ENCODE measurements at regions of chr10 and their contacts with region 1.

Region 1: DNA sequence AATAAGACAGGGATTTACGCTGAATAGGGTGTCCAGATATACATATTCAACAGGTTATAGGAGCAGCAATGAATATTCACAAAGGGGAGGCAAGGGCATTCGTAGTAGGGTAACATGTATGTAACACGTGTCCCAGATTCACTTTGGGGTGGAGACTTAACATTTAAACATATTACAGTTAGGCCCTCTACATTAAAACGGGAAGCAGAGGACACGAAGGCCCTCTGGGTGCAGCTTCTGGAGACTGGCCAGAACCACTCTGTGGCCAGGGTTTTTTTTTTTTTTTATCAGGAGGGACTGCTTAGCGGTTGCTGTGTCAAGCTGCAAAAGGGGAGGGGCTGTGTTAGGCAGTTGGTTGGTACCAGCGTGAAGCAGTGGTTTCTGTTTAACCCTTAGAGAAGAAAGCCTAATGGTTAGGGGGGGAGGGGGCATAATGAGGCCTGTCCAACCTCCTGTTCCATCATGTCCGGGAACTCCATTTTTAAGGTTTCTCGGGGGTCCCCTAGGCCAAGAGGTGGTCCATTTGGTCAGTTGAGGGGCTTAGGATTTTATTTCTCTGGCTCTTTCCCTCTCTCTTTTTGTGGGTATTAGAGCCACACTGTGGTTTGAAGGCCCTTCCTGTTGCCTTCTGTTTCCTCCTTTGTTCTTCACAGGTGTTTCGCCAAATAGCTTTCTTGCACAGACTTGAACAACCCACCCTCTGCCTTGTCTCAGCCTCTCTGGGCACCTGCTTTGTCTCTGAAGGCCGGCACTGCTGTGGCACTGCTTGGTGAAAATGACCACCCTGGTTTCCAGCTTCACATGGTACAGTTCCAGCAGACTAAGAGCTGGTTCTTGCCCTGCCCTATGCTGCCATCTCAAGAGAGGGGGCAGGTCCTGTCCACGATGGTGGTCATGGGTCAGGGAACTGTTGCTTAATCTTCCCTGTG is 26.4 kb downstream of the PRF1 start:
- DNase-seq: peak; percentile 81
- ATAC-seq: peak; percentile 76
- H3K4me3 ChIP-seq: peak overlapping the region; percentile 26; the same call in 1 of the 2 replicates
- H3K27ac ChIP-seq: peak overlapping the region; percentile 89
- H3K4me1 ChIP-seq: peaks cover 41% of the 10 kb centered on the region
- H3K27me3 ChIP-seq: no peaks in the 10 kb centered on the region
- CTCF ChIP-seq: no peak
- EP300 ChIP-seq: peak; percentile 21 to 81; a peak in 3 of 4 replicates
- POLR2A ChIP-seq: no peak
- RAD21 ChIP-seq: 0 out of 2 replicates have a peak, but pooled peaks have one; percentile 2

Region 2: GRCh38 chr10:70558871-70559810 is 17.0 kb before region 1 on chr10:
- CTCF ChIA-PET with region 1: interaction called, 11 read pairs
- POLR2A ChIA-PET with region 1: no interaction called
- RAD21 ChIA-PET with region 1: interaction called, 5 read pairs
- SMC1A ChIA-PET with region 1: interaction called, 3 read pairs
- in situ Hi-C with region 1: no loop called
- intact Hi-C with region 1: no loop called
- DNase-seq: no peak
- ATAC-seq: peak; percentile 79
- H3K4me3 ChIP-seq: no peak overlapping the region
- H3K27ac ChIP-seq: no peak overlapping the region
- H3K4me1 ChIP-seq: no peaks in the 10 kb centered on the region; the same call in 1 of the 2 replicates
- H3K27me3 ChIP-seq: no peaks in the 10 kb centered on the region
- CTCF ChIP-seq: peak; percentile 23 to 35 (median 31); a peak in 3 of 6 replicates
- EP300 ChIP-seq: no peak
- POLR2A ChIP-seq: no peak
- RAD21 ChIP-seq: peak; percentile 55

Region 3: DNA sequence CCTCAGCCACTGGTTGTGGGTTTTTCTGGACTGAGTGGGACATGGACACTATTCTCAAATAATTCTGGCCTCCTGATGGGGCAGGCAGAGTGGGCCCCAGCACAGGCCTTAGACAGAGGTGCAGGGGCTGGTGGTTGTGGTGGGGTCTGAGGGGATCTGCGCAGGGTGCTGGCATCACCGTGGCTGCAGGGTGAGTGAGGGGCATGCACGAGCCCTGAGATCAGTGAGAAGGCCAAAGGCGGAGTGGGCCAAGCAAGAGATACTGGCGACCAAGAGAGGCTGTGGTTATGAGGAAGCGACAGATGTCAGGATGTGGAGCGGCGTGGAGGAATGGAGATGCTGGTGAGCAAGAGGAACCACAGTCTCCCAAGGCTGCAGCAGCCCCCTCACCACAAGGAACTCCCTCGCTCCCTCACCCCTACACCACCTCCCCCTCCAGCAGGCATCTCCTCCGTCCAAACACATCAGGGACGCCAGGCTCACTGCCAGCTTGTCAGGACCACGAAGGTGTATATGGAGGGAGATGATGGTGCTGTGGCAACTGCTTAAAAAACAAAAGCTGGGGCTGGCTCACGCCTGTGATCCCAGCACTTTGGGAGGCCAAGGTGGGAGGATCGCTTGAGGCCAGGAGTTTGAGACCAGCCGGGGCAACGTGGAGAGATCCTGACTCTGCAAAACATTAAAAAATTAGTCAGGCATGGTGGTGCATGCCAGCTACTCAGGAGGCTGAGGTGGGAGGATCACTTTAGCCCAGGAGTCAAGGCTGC is 16.8 kb after region 1 on chr10:
- CTCF ChIA-PET with region 1: interaction called, 8 read pairs
- POLR2A ChIA-PET with region 1: interaction called, 23 read pairs
- RAD21 ChIA-PET with region 1: interaction called, 35 read pairs
- SMC1A ChIA-PET with region 1: interaction called, 46 read pairs
- in situ Hi-C with region 1: no loop called
- intact Hi-C with region 1: no loop called
- DNase-seq: no peak
- ATAC-seq: no peak
- H3K4me3 ChIP-seq: no peak overlapping the region
- H3K27ac ChIP-seq: no peak overlapping the region
- H3K4me1 ChIP-seq: peaks cover 23% of the 10 kb centered on the region
- H3K27me3 ChIP-seq: no peaks in the 10 kb centered on the region
- CTCF ChIP-seq: no peak
- EP300 ChIP-seq: no peak
- POLR2A ChIP-seq: no peak
- RAD21 ChIP-seq: no peak

Region 4: GRCh38 chr10:70656489-70656888 is 80.4 kb after region 1 on chr10:
- CTCF ChIA-PET with region 1: no interaction called
- POLR2A ChIA-PET with region 1: no interaction called
- RAD21 ChIA-PET with region 1: no interaction called
- SMC1A ChIA-PET with region 1: interaction called, 4 read pairs
- in situ Hi-C with region 1: no loop called
- intact Hi-C with region 1: loop called (anchors 5 kb)
- DNase-seq: peak; percentile 56
- ATAC-seq: peak; percentile 96
- H3K4me3 ChIP-seq: no peak overlapping the region
- H3K27ac ChIP-seq: no peak overlapping the region
- H3K4me1 ChIP-seq: peaks cover 16% of the 10 kb centered on the region
- H3K27me3 ChIP-seq: no peaks in the 10 kb centered on the region; a peak in 1 of 4 replicates
- CTCF ChIP-seq: no peak
- EP300 ChIP-seq: no peak
- POLR2A ChIP-seq: no peak
- RAD21 ChIP-seq: no peak